MCF 10A (cell line): ENCODE measurements at regions of chr11 and their contacts with region 1.

Region 1: GRCh38 chr11:130181295-130182272 is 22.0 kb downstream of the ST14 start:
- DNase-seq: peak; percentile 79
- H3K4me3 Mint-ChIP-seq: no peak overlapping the region
- H3K27ac Mint-ChIP-seq: no peak overlapping the region
- H3K4me1 Mint-ChIP-seq: peaks cover 18% of the 10 kb centered on the region
- H3K27me3 Mint-ChIP-seq: no peaks in the 10 kb centered on the region
- CTCF ChIP-seq: no peak

Region 2: DNA sequence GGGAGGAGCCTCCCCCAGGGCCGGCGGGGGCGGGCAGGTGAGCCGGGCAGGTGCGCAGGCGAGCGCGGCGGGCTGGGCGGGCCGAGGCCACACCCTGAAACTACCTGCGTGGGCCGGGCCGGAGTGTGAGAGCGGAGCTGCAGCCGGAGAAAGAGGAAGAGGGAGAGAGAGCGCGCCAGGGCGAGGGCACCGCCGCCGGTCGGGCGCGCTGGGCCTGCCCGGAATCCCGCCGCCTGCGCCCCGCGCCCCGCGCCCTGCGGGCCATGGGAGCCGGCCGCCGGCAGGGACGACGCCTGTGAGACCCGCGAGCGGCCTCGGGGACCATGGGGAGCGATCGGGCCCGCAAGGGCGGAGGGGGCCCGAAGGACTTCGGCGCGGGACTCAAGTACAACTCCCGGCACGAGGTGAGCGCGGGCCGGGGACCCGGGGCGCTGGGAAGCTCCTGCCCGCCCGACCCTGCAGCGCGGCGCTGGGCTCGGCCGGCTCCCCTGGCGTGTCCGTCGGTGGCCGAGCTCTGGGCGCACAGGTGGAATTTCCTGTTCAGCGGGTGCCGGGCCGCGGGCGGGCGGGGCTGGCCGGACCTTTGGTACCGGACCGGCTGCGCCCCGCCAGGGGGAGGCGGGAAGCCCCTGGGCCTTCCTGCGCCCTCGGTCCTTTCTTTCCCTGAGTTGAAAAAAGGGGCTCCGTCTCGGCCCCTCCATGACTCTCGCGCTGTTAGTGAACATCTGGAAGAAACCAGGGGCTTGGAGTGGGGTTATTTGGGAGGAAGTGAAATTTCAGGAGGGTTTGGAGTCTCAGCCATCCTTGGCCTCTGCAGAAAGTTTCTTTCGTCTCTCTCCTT is 21.7 kb before region 1 on chr11 and contains the start of gene ST14:
- CTCF ChIA-PET with region 1: interaction called, 3 read pairs
- POLR2A ChIA-PET with region 1: interaction called, 14 read pairs
- intact Hi-C with region 1: no loop called
- DNase-seq: peak; percentile 79
- H3K4me3 Mint-ChIP-seq: peak within 1 kb of the TSS; percentile 76
- H3K27ac Mint-ChIP-seq: peak within 1 kb of the TSS; percentile 63
- H3K4me1 Mint-ChIP-seq: peaks cover 30% of the 10 kb centered on the region
- H3K27me3 Mint-ChIP-seq: peaks cover 17% of the 10 kb centered on the region
- CTCF ChIP-seq: no peak
- total RNA-seq, gene ST14: 24.8 and 27.2 TPM in 2 replicates

Region 3: GRCh38 chr11:130168105-130168504 is 13.5 kb before region 1 on chr11:
- CTCF ChIA-PET with region 1: interaction called, 3 read pairs
- POLR2A ChIA-PET with region 1: interaction called, 14 read pairs
- intact Hi-C with region 1: no loop called
- DNase-seq: no peak
- H3K4me3 Mint-ChIP-seq: no peak overlapping the region
- H3K27ac Mint-ChIP-seq: no peak overlapping the region
- H3K4me1 Mint-ChIP-seq: peaks cover 14% of the 10 kb centered on the region
- H3K27me3 Mint-ChIP-seq: no peaks in the 10 kb centered on the region
- CTCF ChIP-seq: no peak

Region 4: GRCh38 chr11:130218501-130219070 is 37.0 kb after region 1 on chr11:
- CTCF ChIA-PET with region 1: no interaction called
- POLR2A ChIA-PET with region 1: no interaction called
- intact Hi-C with region 1: no loop called
- DNase-seq: no peak
- H3K4me3 Mint-ChIP-seq: no peak overlapping the region
- H3K27ac Mint-ChIP-seq: no peak overlapping the region
- H3K4me1 Mint-ChIP-seq: no peaks in the 10 kb centered on the region
- H3K27me3 Mint-ChIP-seq: no peaks in the 10 kb centered on the region
- CTCF ChIP-seq: no peak

Region 5: GRCh38 chr11:130269326-130269943 is 87.9 kb after region 1 on chr11:
- CTCF ChIA-PET with region 1: no interaction called
- POLR2A ChIA-PET with region 1: no interaction called
- intact Hi-C with region 1: no loop called
- DNase-seq: no peak
- H3K4me3 Mint-ChIP-seq: no peak overlapping the region
- H3K27ac Mint-ChIP-seq: no peak overlapping the region
- H3K4me1 Mint-ChIP-seq: no peaks in the 10 kb centered on the region
- H3K27me3 Mint-ChIP-seq: no peaks in the 10 kb centered on the region
- CTCF ChIP-seq: no peak

Region 6: GRCh38 chr11:130359419-130359818 is 177.8 kb after region 1 on chr11:
- CTCF ChIA-PET with region 1: no interaction called
- POLR2A ChIA-PET with region 1: no interaction called
- intact Hi-C with region 1: no loop called
- DNase-seq: no peak
- H3K4me3 Mint-ChIP-seq: no peak overlapping the region
- H3K27ac Mint-ChIP-seq: no peak overlapping the region
- H3K4me1 Mint-ChIP-seq: no peaks in the 10 kb centered on the region
- H3K27me3 Mint-ChIP-seq: no peaks in the 10 kb centered on the region
- CTCF ChIP-seq: no peak